ENCODE measurements at regions of chr20 and their contacts with region 1.

Region 1: GRCh38 chr20:35329435-35330139 is 37.4 kb upstream of the FAM83C start:
- DNase-seq: peak; percentile 69
- H3K4me3 Mint-ChIP-seq: no peak overlapping the region
- H3K27ac Mint-ChIP-seq: no peak overlapping the region
- H3K4me1 Mint-ChIP-seq: peaks cover 8% of the 10 kb centered on the region
- H3K27me3 Mint-ChIP-seq: no peaks in the 10 kb centered on the region

Region 2: GRCh38 chr20:35226775-35227681 is 102.6 kb before region 1 on chr20:
- CTCF ChIA-PET with region 1: no interaction called
- POLR2A ChIA-PET with region 1: no interaction called
- DNase-seq: peak; percentile 51
- H3K4me3 Mint-ChIP-seq: peak overlapping the region; percentile 52
- H3K27ac Mint-ChIP-seq: no peak overlapping the region
- H3K4me1 Mint-ChIP-seq: peaks cover 12% of the 10 kb centered on the region
- H3K27me3 Mint-ChIP-seq: peaks cover 50% of the 10 kb centered on the region

Region 3: GRCh38 chr20:35311409-35311808 is 18.2 kb before region 1 on chr20:
- CTCF ChIA-PET with region 1: interaction called, 95 read pairs
- POLR2A ChIA-PET with region 1: no interaction called
- DNase-seq: peak; percentile 77
- H3K4me3 Mint-ChIP-seq: no peak overlapping the region
- H3K27ac Mint-ChIP-seq: peak overlapping the region; percentile 27
- H3K4me1 Mint-ChIP-seq: peaks cover 69% of the 10 kb centered on the region
- H3K27me3 Mint-ChIP-seq: no peaks in the 10 kb centered on the region

Region 4: DNA sequence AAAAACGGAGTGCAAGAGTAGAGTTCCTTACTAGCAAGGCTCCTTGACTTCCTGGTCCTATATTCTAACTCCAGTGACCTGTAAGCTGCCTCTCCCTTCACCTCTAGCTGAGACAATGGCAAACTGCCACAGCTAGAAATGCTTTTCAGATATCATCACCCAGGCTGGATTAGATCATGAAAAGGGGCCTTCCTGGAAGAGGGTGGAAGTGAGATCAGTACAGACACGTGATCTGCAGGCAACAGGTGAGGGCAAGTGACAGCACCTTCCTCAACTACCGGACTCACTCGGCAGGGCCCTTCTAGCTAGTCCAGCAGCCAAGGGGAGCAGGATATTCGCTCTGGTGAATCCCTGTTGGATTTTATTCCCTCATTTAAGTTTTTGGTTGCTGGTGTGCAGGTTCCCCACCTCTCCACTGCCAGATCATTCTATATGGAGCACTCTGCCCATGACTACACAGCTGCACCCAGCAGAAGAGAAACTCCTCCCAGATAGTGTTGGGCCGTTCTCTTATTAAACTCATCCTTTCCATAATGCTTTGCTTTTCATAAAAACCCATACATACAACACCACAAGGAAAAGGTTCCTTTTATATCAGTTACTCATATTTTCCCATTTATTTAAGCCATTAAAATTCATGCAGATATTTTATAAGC is 11.0 kb before region 1 on chr20:
- CTCF ChIA-PET with region 1: interaction called, 16 read pairs
- POLR2A ChIA-PET with region 1: no interaction called
- DNase-seq: no peak
- H3K4me3 Mint-ChIP-seq: no peak overlapping the region
- H3K27ac Mint-ChIP-seq: no peak overlapping the region
- H3K4me1 Mint-ChIP-seq: peaks cover 49% of the 10 kb centered on the region
- H3K27me3 Mint-ChIP-seq: no peaks in the 10 kb centered on the region

Measured in activated CD4-positive, alpha-beta memory T cell treated with anti-CD3 and anti-CD28 coated beads, Interleukin-2, amount 10 ng/mL, durations not matched to agents 7 days and 5 days (primary cell).